Adrenal gland (tissue), 19 donors: ENCODE measurements at regions of chr9 and their contacts with region 1.

Region 1: DNA sequence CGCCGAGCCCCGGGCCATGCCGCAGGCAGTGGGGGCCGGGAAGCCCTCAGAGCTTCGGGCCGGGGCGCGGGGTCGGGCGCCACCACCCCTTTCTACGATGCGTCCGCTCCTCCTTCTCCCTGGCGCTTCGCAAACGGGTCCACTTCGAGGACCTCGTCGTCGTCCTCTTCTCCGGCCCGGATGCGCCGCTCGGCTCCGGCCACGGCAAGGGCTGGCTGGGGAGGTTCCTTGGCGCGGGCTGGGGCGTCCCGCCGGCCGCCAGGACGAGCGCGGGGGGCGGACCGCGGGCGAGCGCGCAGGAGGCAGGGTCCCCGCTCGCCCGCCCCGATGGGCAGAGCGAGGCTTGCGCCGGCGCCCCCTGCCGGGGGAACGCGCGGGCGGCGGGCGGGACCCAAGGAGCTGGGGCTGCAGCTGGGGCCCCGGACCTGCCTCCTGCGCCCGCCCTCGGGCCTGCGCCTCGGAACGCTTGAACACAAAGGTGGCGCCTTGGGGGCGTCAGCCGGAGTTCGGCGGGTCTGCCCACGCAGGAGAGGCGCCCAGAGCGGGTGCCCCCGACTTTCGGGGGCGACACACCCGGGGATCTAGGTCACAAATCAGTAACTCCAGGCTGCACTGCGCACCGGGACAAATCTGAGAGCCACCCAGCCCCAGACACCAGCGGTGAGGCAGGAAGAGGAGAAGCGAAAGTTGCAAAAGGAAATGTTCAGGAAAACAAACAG is at the start of gene ROR2:
- DNase-seq: peak; percentile 48 to 79 (median 69)
- H3K4me3 ChIP-seq: peak within 1 kb of the TSS in 3 of 4 donors; percentile 42 to 62 (median 55)
- H3K27ac ChIP-seq: peak within 1 kb of the TSS in 4 of 5 donors; percentile 48 to 87 (median 76)
- H3K4me1 ChIP-seq: peaks cover 0 to 29% of the 10 kb centered on the region in 2 donors
- H3K27me3 ChIP-seq: peaks cover 14% of the 10 kb centered on the region
- CTCF ChIP-seq: peak in 4 of 6 experiments; percentile 23 to 90 (median 76)
- POLR2A ChIP-seq: peak in 1 of 2 donors; percentile 43
- total RNA-seq, gene ROR2: 3.9 to 23.9 (median 14.7) TPM

Region 2: DNA sequence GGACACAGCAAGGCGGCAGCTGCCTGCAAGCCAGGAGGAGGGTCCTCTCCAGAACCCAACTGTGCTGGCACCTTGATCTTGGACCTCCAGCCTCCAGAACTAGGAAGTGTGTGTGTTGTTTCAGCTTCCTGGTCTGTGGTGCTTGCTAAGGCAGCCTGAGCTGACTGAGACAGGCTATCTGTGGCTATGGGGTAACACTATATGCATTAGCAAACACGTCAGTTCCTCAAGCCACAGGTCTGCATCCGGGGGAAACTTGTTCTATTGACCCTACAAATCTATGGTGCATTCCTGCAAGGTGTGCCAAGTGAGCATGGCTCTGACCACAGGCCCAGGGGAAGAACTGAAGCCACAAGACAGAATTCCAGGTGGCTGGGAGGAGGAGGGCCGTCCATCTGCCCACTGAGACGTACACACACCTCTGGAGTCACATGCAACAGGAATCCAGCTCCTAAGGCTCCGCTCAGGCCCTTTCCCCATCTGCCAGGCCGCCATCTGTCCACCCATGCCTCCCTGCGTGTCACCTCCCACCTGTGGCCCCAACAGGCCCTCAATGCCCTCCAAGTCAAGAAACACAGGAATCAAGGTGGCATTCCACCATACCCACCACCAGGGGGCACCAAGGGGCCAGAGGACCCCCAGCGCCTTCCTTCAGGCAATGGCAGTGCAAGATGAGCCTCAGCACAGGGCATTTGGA is 174.9 kb before region 1 on chr9:
- intact Hi-C with region 1: loop called in 1 of 2 experiments (anchors 5 kb)
- DNase-seq: peak; percentile 65 to 88 (median 74)
- H3K4me3 ChIP-seq: no peak overlapping the region
- H3K27ac ChIP-seq: no peak overlapping the region
- H3K4me1 ChIP-seq: no peaks in the 10 kb centered on the region
- H3K27me3 ChIP-seq: no peaks in the 10 kb centered on the region
- CTCF ChIP-seq: peak; percentile 80 to 89 (median 85)
- POLR2A ChIP-seq: no peak

Region 3: DNA sequence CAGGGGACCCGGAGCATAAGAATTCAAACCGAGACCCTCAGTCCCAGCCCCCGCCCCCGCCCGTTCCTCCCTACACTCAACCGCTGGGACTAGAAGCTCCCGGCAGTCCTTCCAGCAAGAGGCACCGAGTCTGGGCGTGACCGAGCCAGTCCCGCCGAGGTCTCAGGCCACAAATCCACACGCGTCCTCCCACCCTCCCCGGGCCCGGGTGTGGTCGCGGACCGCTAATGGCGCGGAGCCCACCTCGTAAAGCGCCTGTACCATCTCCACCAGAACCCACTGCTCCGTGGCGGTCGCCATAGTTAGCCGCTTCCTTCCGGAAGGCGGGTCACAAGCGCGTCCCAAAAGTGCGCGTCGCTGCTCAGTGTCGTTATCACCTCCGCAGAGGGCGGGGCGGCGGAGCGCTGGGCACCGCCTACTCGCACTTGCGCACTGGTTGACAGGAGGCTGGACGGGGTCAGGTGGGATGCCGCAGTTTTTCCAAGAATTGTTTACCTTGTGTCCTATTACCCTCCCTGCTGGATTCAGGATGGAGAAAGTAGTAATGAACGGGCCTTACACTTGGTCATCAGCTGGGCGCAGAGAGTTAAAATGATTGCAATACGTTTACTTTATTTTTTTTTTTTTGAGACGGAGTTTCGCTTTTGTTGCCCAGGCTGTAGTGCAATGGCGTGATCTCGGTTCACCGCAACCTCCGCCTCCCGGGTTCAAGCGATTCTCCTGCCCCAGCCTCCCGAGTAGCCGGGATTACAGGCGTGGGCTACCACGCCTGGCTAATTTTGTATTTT is 165.2 kb after region 1 on chr9 and contains the start of gene SPTLC1:
- intact Hi-C with region 1: loop called in 1 of 2 experiments (anchors 10 kb)
- DNase-seq: peak; percentile 94 to 98 (median 96)
- H3K4me3 ChIP-seq: peak within 1 kb of the TSS; percentile 65 to 96 (median 82)
- H3K27ac ChIP-seq: peak within 1 kb of the TSS; percentile 78 to 93 (median 88)
- H3K4me1 ChIP-seq: peaks cover 8 to 22% of the 10 kb centered on the region in 2 donors
- H3K27me3 ChIP-seq: no peaks in the 10 kb centered on the region
- CTCF ChIP-seq: no peak
- POLR2A ChIP-seq: peak; percentile 80 to 90
- total RNA-seq, gene SPTLC1: 59.0 to 106 (median 72.9) TPM